Caco-2 (cell line): ENCODE measurements at regions of chr2 and their contacts with region 1.

Region 1: DNA sequence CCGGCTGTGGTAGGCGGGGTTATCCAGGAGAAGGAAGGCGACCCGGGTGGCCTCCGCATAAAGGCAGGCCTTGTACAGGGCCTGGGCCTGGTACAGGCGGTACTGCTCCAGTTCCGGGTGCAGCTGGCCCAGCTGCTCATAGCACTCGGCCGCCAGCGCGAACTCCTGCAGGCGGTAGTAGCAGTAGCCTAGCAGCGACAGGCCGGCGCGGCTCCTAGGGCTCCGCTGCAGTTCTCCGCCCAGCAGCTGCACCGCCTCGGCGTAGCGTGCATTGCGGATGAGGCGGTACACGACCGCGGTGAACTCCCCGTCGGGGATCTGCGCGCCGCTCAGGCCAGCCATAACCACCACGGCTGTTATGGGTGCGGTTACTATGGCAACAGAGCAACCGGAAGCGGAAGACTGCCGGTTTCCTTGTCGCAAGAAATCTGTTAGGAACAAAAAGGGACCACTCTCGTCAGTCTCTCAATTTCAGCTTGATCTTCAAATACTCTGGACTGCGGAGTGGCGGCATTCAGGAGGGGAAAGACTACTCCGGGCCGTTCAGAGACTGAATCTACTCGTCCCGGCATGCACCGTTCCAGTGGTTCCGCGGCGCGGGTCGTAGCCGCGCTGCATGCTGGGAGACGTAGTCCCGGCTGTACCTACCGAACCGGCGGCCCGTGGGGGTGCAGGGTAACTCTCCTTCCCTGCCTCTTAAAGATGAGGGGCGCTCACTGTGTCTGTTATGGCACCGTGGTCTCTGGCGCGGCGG is 160.0 kb downstream of the AGPS start:
- DNase-seq: peak; percentile 91 to 92
- H3K4me3 ChIP-seq: peak overlapping the region; percentile 76
- H3K4me3 Mint-ChIP-seq: peak overlapping the region; percentile 99
- H3K27ac Mint-ChIP-seq: peak overlapping the region; percentile 100
- H3K4me1 ChIP-seq: no peaks in the 10 kb centered on the region
- H3K4me1 Mint-ChIP-seq: no peaks in the 10 kb centered on the region
- H3K27me3 ChIP-seq: no peaks in the 10 kb centered on the region
- H3K27me3 Mint-ChIP-seq: no peaks in the 10 kb centered on the region
- CTCF ChIP-seq: no peak

Region 2: GRCh38 chr2:177405029-177405692 is 147.4 kb before region 1 on chr2:
- CTCF ChIA-PET with region 1: no interaction called
- POLR2A ChIA-PET with region 1: no interaction called
- intact Hi-C with region 1: no loop called
- DNase-seq: no peak
- H3K4me3 ChIP-seq: no peak overlapping the region
- H3K4me3 Mint-ChIP-seq: no peak overlapping the region
- H3K27ac Mint-ChIP-seq: no peak overlapping the region
- H3K4me1 ChIP-seq: peaks cover 16% of the 10 kb centered on the region; the same call in 1 of the 2 replicates
- H3K4me1 Mint-ChIP-seq: peaks cover 21% of the 10 kb centered on the region
- H3K27me3 ChIP-seq: no peaks in the 10 kb centered on the region
- H3K27me3 Mint-ChIP-seq: no peaks in the 10 kb centered on the region
- CTCF ChIP-seq: no peak

Region 3: GRCh38 chr2:177572236-177572671 is 19.7 kb after region 1 on chr2:
- CTCF ChIA-PET with region 1: no interaction called
- POLR2A ChIA-PET with region 1: no interaction called
- intact Hi-C with region 1: loop called (anchors 2 kb)
- DNase-seq: no peak
- H3K4me3 ChIP-seq: no peak overlapping the region
- H3K4me3 Mint-ChIP-seq: no peak overlapping the region
- H3K27ac Mint-ChIP-seq: no peak overlapping the region
- H3K4me1 ChIP-seq: no peaks in the 10 kb centered on the region
- H3K4me1 Mint-ChIP-seq: no peaks in the 10 kb centered on the region
- H3K27me3 ChIP-seq: no peaks in the 10 kb centered on the region; the same call in 1 of the 2 replicates
- H3K27me3 Mint-ChIP-seq: peaks cover 3% of the 10 kb centered on the region
- CTCF ChIP-seq: no peak

Region 4: DNA sequence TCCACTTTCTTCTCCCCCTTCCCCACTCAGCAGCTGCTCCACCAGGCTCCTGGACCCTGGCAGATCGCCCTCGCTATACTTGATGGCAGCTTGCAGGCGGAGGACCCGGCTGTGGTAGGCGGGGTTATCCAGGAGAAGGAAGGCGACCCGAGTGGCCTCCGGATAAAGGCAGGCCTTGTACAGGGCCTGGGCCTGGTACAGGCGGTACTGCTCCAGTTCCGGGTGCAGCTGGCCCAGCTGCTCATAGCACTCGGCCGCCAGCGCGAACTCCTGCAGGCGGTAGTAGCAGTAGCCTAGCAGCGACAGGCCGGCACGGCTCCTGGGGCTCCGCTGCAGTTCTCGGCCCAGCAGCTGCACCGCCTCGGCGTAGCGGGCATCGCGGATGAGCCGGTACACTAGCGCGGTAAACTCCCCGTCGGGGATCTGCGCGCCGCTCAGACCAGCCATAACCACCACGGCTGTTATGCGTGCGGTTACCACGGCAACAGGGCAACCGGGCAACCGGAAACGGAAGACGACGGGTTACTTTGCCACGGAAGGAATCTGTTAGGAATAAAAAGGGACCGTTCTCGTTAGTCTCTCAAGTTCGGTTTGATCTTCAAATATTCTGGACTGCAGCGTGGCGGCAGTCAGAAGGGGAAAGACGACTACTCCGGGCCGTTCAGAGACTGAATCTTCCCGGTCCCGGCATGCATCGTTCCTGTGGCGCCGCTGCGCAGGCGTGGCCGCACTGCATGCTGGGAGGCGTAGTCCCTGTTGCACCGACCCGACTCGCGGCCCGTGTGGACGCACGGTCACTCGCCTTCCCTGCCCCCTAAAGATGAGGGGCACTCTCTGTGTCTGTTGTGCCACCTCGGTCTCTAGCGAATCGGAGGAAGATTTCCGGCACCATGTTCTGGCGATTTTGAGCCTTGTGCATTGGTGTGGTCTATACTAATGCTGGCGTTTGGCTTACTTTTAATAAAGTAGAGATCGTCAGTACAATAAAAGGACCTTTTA is 66.0 kb after region 1 on chr2:
- CTCF ChIA-PET with region 1: no interaction called
- POLR2A ChIA-PET with region 1: no interaction called
- intact Hi-C with region 1: loop called (anchors 1 kb)
- DNase-seq: peak; percentile 89 to 91
- H3K4me3 ChIP-seq: peak overlapping the region; percentile 64
- H3K4me3 Mint-ChIP-seq: peak overlapping the region; percentile 90
- H3K27ac Mint-ChIP-seq: peak overlapping the region; percentile 99
- H3K4me1 ChIP-seq: no peaks in the 10 kb centered on the region
- H3K4me1 Mint-ChIP-seq: no peaks in the 10 kb centered on the region
- H3K27me3 ChIP-seq: no peaks in the 10 kb centered on the region
- H3K27me3 Mint-ChIP-seq: peaks cover 2% of the 10 kb centered on the region
- CTCF ChIP-seq: no peak

Region 5: DNA sequence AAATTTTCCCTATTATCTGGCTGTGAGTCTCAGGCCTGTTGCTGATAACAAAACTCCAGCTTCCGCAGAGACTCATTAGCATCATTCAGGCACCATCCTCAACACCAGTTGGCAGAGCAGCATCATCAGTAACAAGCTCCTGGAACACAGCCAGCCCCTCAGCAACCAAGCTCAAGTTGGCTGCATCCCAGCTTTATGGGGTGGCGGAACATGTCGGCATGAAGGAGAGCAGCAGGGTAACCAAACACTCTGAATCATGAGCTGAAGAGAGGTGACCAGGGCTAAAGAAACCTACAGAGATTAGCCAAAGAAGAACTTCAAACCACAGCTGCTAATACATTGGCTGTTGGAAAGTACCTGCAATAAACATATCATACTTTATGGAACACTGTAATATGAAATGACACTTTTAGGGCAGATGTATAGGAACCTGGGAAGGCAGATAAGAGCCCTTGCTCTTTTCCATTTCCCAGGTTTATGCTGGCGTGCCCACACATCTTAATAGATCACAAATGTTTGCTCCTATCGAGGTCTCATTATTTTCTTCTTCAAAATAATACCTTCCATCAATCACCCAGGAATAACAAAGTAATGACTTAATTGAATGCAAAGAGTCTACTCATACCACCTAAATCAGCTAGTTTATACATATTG is 456.2 kb after region 1 on chr2:
- CTCF ChIA-PET with region 1: no interaction called
- POLR2A ChIA-PET with region 1: no interaction called
- intact Hi-C with region 1: no loop called
- DNase-seq: no peak
- H3K4me3 ChIP-seq: no peak overlapping the region
- H3K4me3 Mint-ChIP-seq: no peak overlapping the region
- H3K27ac Mint-ChIP-seq: no peak overlapping the region
- H3K4me1 ChIP-seq: no peaks in the 10 kb centered on the region
- H3K4me1 Mint-ChIP-seq: no peaks in the 10 kb centered on the region
- H3K27me3 ChIP-seq: no peaks in the 10 kb centered on the region
- H3K27me3 Mint-ChIP-seq: peaks cover 16% of the 10 kb centered on the region
- CTCF ChIP-seq: no peak

Region 6: GRCh38 chr2:178057179-178057680 is 504.6 kb after region 1 on chr2:
- CTCF ChIA-PET with region 1: no interaction called
- POLR2A ChIA-PET with region 1: no interaction called
- intact Hi-C with region 1: no loop called
- DNase-seq: no peak
- H3K4me3 ChIP-seq: no peak overlapping the region
- H3K4me3 Mint-ChIP-seq: no peak overlapping the region
- H3K27ac Mint-ChIP-seq: no peak overlapping the region
- H3K4me1 ChIP-seq: no peaks in the 10 kb centered on the region
- H3K4me1 Mint-ChIP-seq: no peaks in the 10 kb centered on the region
- H3K27me3 ChIP-seq: no peaks in the 10 kb centered on the region
- H3K27me3 Mint-ChIP-seq: peaks cover 10% of the 10 kb centered on the region
- CTCF ChIP-seq: no peak